Tibial artery (tissue), 4 donors: ENCODE measurements at regions of chr10 and their contacts with region 1.

Region 1: GRCh38 chr10:118241229-118242137 is 100.6 kb downstream of the FAM204A start:
- DNase-seq: peak; percentile 82 to 87
- H3K4me3 ChIP-seq: no peak overlapping the region
- H3K27ac ChIP-seq: no peak overlapping the region
- H3K4me1 ChIP-seq: no peaks in the 10 kb centered on the region
- H3K27me3 ChIP-seq: peaks cover 0 to 31% of the 10 kb centered on the region in 2 donors
- CTCF ChIP-seq: peak; percentile 86 to 89

Region 2: DNA sequence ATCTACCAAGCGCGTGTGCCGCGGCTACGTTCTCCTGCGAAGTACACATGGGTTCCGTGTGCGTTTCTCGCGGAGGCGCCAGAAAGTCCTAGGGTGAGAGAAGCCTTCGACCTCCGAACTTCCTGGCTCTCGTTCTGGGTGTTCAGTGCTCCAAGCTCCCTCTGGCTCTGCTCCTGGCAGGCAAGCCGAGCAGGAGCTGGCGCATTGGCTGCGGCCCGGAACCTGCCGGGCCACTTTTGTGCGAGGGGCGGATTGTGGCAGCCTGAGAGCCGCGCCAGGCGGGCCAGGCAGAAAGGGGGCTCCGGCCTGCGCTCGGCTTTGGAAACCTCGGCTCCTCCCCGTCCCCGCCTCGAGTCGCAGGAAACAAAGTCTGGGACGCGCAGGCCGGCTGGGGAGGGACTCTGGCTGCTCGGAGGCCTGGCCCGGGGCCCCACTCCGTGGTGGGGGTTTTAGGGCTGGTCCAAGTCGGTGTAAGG is 689.3 kb before region 1 on chr10:
- intact Hi-C with region 1: loop called (anchors 5 kb)
- DNase-seq: peak in 1 of 2 donors; percentile 75
- H3K4me3 ChIP-seq: peak overlapping the region; percentile 27 to 32
- H3K27ac ChIP-seq: peak overlapping the region; percentile 40 to 64
- H3K4me1 ChIP-seq: peaks cover 0 to 38% (median 17%) of the 10 kb centered on the region in 4 donors
- H3K27me3 ChIP-seq: peaks cover 0 to 55% of the 10 kb centered on the region in 2 donors
- CTCF ChIP-seq: no peak

Region 3: DNA sequence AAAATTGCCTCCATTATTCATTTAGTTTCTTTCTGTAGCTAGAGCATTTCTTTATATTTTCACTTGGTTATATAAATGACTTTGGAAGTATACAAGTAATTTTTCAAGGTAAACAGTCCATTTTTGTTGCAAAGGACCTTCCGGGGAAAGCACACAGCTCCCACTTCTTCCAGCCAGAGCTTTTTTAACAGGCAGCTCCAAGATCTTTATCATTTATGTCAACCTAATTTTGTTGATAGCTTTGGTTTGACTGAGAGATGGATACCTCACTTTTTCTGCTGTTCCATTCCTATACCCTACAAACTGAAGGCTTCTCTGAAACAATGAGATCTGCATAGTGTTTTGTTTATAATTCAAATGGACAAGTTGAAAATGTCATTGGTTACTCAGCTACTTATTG is 145.5 kb before region 1 on chr10:
- intact Hi-C with region 1: no loop called
- DNase-seq: no peak
- H3K4me3 ChIP-seq: no peak overlapping the region
- H3K27ac ChIP-seq: no peak overlapping the region
- H3K4me1 ChIP-seq: peaks cover 0 to 2% (median 0%) of the 10 kb centered on the region in 4 donors
- H3K27me3 ChIP-seq: no peaks in the 10 kb centered on the region
- CTCF ChIP-seq: no peak